ENCODE measurements at regions of chr16 and their contacts with region 1.

Region 1: DNA sequence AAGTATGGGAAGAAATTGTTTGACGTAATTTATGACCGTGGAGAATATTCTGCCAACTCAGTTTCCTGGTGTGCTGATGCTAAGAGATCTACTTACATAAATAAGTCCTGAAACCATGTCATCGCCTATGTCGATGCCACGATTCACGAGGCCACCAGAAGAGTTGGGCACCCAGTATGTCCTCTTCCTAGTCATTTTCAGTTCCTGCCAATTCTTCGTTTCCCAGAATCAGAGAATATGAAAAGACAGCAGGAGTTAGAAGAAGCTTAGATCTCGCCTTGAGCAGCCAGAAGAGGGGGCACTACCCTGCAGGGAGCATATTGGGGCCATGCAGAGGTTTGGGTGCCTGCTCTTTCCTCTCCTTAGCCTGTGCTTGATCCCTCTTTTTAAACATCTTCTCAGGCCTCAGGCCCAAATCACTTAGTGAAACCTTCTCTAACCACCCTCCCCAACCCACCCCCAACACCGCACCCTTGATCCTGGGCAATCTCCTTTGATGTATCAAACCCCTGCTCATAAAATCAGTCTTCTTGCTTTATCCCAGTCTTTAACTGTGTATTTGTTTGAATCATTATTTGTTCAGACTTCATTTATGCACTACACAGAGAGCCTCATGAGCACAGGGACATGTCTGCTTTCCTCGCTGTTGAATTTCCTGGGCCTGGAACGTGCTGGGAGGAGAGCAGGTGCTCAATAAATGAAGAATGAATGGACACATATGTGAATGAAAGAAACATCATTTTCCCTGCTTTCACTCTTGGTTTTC is 12.2 kb upstream of the LONP2 start:
- DNase-seq: peak; percentile 29 to 61
- H3K4me3 ChIP-seq: no peak overlapping the region
- H3K27ac ChIP-seq: no peak overlapping the region
- H3K4me1 ChIP-seq: no peaks in the 10 kb centered on the region
- H3K27me3 ChIP-seq: no peaks in the 10 kb centered on the region
- CTCF ChIP-seq: peak; percentile 58 to 75 (median 68)
- EP300 ChIP-seq: no peak
- POLR2A ChIP-seq: no peak
- RAD21 ChIP-seq: peak; percentile 67 to 74

Region 2: GRCh38 chr16:48156790-48157209 is 75.1 kb before region 1 on chr16:
- CTCF ChIA-PET with region 1: no interaction called
- POLR2A ChIA-PET with region 1: no interaction called
- DNase-seq: peak; percentile 46 to 98
- H3K4me3 ChIP-seq: no peak overlapping the region
- H3K27ac ChIP-seq: no peak overlapping the region
- H3K4me1 ChIP-seq: no peaks in the 10 kb centered on the region
- H3K27me3 ChIP-seq: peaks cover 0 to 4% (median 3%) of the 10 kb centered on the region in 4 experiments; a peak in 6 of 7 replicates
- CTCF ChIP-seq: peak; percentile 83 to 94 (median 89)
- EP300 ChIP-seq: peak in 1 of 2 experiments; percentile 10; a peak in 1 of 3 replicates
- POLR2A ChIP-seq: no peak
- RAD21 ChIP-seq: peak; percentile 87 to 88

Region 3: DNA sequence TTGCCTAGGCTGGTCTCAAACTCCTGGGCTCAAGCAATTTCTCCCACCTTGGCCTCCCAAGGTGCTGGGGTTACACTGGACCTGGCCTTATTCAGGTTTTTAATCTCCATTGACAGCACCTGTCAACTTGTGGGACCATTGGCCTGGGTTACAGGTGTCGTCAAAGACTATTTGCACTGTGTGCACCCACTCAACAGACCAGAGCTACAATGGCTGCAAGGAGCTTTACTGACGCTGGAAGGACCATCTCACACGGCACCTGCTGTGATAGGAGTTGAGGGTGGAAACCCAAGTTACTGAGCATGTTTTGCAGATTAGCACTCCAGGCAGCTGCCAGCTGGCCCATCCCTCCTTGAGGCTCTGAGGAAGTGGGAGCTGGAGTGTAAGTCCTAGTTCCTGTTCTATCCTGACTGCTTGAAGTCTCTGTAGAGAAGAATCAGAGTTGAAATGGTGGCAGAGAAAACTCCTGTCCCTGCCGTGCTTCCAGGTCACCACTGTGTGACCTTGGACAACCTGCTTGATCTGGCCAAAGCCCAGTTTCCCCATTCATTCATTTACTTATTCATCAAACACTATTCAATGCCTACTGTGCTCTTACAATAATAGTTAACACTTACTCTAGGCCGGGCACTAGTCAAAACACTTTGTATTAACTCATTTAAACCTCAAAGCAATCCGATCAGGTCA is 30.3 kb before region 1 on chr16:
- CTCF ChIA-PET with region 1: no interaction called
- POLR2A ChIA-PET with region 1: no interaction called
- DNase-seq: no peak
- H3K4me3 ChIP-seq: no peak overlapping the region
- H3K27ac ChIP-seq: no peak overlapping the region
- H3K4me1 ChIP-seq: no peaks in the 10 kb centered on the region
- H3K27me3 ChIP-seq: no peaks in the 10 kb centered on the region
- CTCF ChIP-seq: no peak
- EP300 ChIP-seq: no peak
- POLR2A ChIP-seq: no peak
- RAD21 ChIP-seq: no peak

Region 4: DNA sequence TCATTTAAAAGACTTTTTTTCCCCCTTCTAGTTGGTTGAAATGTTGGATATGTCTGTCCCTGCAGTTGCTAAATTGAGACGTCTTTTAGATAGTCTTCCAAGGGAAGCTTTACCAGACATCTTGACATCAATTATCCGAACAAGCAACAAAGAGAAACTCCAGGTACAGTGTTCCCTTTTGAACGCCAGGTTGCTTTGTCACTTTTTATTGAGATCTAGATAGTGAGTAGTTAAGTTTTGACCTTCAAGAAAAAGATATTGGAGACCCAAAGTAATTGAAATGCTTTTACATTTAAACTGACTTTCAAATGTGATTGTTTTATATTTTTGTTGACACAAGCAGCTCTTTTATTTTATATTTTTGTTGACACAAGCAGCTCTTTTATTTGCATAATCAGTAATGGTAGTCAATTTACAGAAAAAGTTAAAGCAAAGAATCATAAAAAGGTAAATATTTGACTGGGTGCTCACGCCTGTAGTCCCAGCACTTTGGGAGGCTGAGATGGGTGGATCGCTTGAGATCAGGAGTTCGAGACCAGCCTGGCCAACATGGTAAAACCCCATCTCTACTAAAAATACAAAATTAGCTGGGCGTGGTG is 24.8 kb after region 1 on chr16:
- CTCF ChIA-PET with region 1: interaction called, 11 read pairs
- POLR2A ChIA-PET with region 1: no interaction called
- DNase-seq: no peak
- H3K4me3 ChIP-seq: no peak overlapping the region
- H3K27ac ChIP-seq: no peak overlapping the region
- H3K4me1 ChIP-seq: no peaks in the 10 kb centered on the region
- H3K27me3 ChIP-seq: no peaks in the 10 kb centered on the region
- CTCF ChIP-seq: no peak
- EP300 ChIP-seq: no peak
- POLR2A ChIP-seq: no peak
- RAD21 ChIP-seq: no peak